Ovary (tissue), 10 donors: ENCODE measurements at regions of chr6 and their contacts with region 1.

Region 1: GRCh38 chr6:6547110-6547879 is 41.2 kb upstream of the LY86 start:
- DNase-seq: peak; percentile 63 to 84 (median 79)
- H3K4me3 ChIP-seq: peak overlapping the region; percentile 34
- H3K27ac ChIP-seq: no peak overlapping the region
- H3K4me1 ChIP-seq: peaks cover 6% of the 10 kb centered on the region
- H3K27me3 ChIP-seq: no peaks in the 10 kb centered on the region
- CTCF ChIP-seq: peak; percentile 56 to 79 (median 60)
- EP300 ChIP-seq: no peak
- POLR2A ChIP-seq: no peak

Region 2: GRCh38 chr6:5143634-5144311 is 1403.5 kb before region 1 on chr6:
- intact Hi-C with region 1: loop called (anchors 5 to 10 kb)
- DNase-seq: peak; percentile 67 to 90 (median 86)
- H3K4me3 ChIP-seq: no peak overlapping the region
- H3K27ac ChIP-seq: no peak overlapping the region
- H3K4me1 ChIP-seq: no peaks in the 10 kb centered on the region
- H3K27me3 ChIP-seq: no peaks in the 10 kb centered on the region
- CTCF ChIP-seq: peak; percentile 70 to 96 (median 75)
- EP300 ChIP-seq: no peak
- POLR2A ChIP-seq: no peak

Region 3: DNA sequence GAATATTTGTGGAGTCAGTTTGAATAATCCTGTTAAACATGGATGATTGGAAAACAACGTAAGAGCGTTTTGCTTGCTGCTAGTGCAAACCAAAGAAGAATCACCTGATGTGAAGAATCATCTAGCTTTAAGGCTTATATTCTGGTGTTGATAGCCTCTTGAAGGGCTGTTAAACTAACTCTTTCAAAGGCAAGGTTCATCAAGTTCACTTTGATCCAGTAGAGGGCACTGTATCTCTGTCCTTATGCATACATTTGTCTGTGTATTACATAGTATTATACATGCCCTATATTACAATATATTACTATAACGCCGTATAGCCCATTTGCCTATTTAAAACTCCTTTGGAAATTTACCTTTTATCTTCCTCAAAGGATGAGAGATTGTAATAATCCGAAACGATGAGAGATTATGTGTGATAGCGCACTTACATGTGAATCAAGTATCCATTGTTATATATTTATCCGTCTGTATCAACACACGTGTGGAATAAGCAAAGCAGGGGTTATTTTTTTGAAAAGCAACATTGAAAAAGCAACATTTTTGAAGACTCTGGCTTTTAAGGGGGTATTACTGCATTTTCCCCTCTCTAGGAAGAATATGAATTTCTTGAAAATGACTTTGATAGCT is 489.8 kb before region 1 on chr6:
- intact Hi-C with region 1: loop called in 1 of 4 experiments (anchors 10 kb)
- DNase-seq: no peak
- H3K4me3 ChIP-seq: no peak overlapping the region
- H3K27ac ChIP-seq: no peak overlapping the region
- H3K4me1 ChIP-seq: no peaks in the 10 kb centered on the region
- H3K27me3 ChIP-seq: no peaks in the 10 kb centered on the region
- CTCF ChIP-seq: no peak
- EP300 ChIP-seq: no peak
- POLR2A ChIP-seq: no peak

Region 4: GRCh38 chr6:7649037-7649810 is 1101.9 kb after region 1 on chr6:
- intact Hi-C with region 1: no loop called
- DNase-seq: no peak
- H3K4me3 ChIP-seq: no peak overlapping the region
- H3K27ac ChIP-seq: no peak overlapping the region
- H3K4me1 ChIP-seq: peaks cover 4% of the 10 kb centered on the region
- H3K27me3 ChIP-seq: no peaks in the 10 kb centered on the region
- CTCF ChIP-seq: no peak
- EP300 ChIP-seq: no peak
- POLR2A ChIP-seq: no peak